Activated T-helper 1 cell treated with anti-CD3 and anti-CD28 coated beads, Interleukin-12 subunit alpha, Interleukin-12 subunit beta, Interleukin-2, Interleukin-4 antibody, amounts not matched to agents 30 ng/mL and 10 ng/mL and 1 ng/mL, durations not matched to agents 14 hours and 24 hours and 36 hours (primary cell): ENCODE measurements at regions of chr14 and their contacts with region 1.

Region 1: GRCh38 chr14:56422703-56423213 is 156.8 kb upstream of the TMEM260 start:
- DNase-seq: no peak
- H3K4me3 Mint-ChIP-seq: no peak overlapping the region
- H3K27ac Mint-ChIP-seq: no peak overlapping the region
- H3K4me1 Mint-ChIP-seq: no peaks in the 10 kb centered on the region
- H3K27me3 Mint-ChIP-seq: peaks cover 13% of the 10 kb centered on the region

Region 2: GRCh38 chr14:55546212-55546874 is 876.4 kb before region 1 on chr14:
- intact Hi-C with region 1: no loop called
- DNase-seq: no peak
- H3K4me3 Mint-ChIP-seq: no peak overlapping the region
- H3K27ac Mint-ChIP-seq: no peak overlapping the region
- H3K4me1 Mint-ChIP-seq: no peaks in the 10 kb centered on the region
- H3K27me3 Mint-ChIP-seq: no peaks in the 10 kb centered on the region

Region 3: DNA sequence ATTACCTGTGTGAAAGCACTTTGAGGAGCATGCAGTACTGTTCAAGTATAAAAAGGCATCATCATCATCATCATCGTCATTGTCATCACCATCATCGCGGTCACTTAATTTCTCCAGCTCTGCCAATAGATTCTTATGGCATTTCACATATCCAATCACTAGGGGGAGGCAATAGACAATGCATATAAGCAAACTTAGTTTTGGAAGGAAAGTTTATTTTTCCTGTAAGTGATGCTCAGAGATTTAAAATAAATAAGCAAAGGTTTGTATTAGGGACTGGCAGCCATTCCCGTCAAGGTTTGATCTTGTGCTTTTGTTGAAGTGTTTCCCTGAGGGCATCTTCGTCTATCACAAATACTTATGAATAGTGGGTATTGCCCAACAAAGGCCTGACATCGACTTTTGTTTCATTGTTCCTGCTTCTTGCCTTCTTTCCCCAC is 715.4 kb before region 1 on chr14:
- intact Hi-C with region 1: loop called (anchors 1 kb)
- DNase-seq: no peak
- H3K4me3 Mint-ChIP-seq: no peak overlapping the region
- H3K27ac Mint-ChIP-seq: no peak overlapping the region
- H3K4me1 Mint-ChIP-seq: no peaks in the 10 kb centered on the region
- H3K27me3 Mint-ChIP-seq: no peaks in the 10 kb centered on the region

Region 4: GRCh38 chr14:55731881-55732498 is 690.8 kb before region 1 on chr14:
- intact Hi-C with region 1: loop called (anchors 1 kb)
- DNase-seq: peak; percentile 21
- H3K4me3 Mint-ChIP-seq: no peak overlapping the region
- H3K27ac Mint-ChIP-seq: no peak overlapping the region
- H3K4me1 Mint-ChIP-seq: peaks cover 26% of the 10 kb centered on the region
- H3K27me3 Mint-ChIP-seq: peaks cover 4% of the 10 kb centered on the region

Region 5: GRCh38 chr14:55864890-55865655 is 557.7 kb before region 1 on chr14:
- intact Hi-C with region 1: loop called (anchors 2 kb)
- DNase-seq: no peak
- H3K4me3 Mint-ChIP-seq: no peak overlapping the region
- H3K27ac Mint-ChIP-seq: no peak overlapping the region
- H3K4me1 Mint-ChIP-seq: peaks cover 18% of the 10 kb centered on the region
- H3K27me3 Mint-ChIP-seq: peaks cover 26% of the 10 kb centered on the region

Region 6: GRCh38 chr14:56378475-56378877 is 44.3 kb before region 1 on chr14:
- intact Hi-C with region 1: no loop called
- DNase-seq: no peak
- H3K4me3 Mint-ChIP-seq: no peak overlapping the region
- H3K27ac Mint-ChIP-seq: no peak overlapping the region
- H3K4me1 Mint-ChIP-seq: no peaks in the 10 kb centered on the region
- H3K27me3 Mint-ChIP-seq: peaks cover 11% of the 10 kb centered on the region